B cell (primary cell): ENCODE measurements at regions of chr19 and their contacts with region 1.

Region 1: DNA sequence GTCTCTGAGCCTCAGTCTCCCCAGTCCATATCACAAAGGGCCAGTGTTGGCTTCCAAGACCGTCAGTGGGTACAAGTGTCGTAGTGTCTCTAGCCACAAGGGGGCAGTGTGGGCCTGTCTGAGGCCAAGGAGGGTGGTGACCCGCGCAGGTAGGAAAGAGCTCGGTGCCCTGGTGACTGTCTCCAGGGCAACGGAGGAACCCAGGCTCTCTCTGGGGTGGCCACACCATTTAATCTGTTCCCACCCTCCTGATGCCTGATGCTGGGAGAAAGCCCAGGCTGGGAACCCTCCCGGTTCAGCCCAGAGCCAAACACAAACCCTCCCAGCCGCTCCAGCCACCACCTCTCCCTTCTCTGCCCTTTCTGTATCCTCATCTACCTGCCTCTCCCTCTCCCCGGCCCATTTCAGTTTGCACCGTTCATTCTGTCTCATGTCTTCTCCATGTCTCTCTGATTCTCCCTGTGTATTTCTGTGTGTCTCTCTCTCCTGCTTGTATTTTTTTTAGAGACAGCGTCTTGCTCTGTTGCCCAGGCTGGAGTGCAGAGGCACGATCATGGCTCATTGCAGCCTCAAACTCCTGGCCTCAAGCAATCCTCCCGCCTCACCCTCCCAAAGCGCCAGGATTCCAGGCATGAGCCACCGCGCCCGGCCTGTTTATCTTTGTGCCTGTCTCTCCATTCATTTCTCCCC is 17.5 kb upstream of the MEIS3 start:
- DNase-seq: peak; percentile 84
- ATAC-seq: peak; percentile 92
- H3K4me3 ChIP-seq: no peak overlapping the region
- H3K4me3 Mint-ChIP-seq: no peak overlapping the region
- H3K27ac ChIP-seq: no peak overlapping the region
- H3K27ac Mint-ChIP-seq: no peak overlapping the region
- H3K4me1 ChIP-seq: peaks cover 3 to 6% of the 10 kb centered on the region in 2 donors
- H3K4me1 Mint-ChIP-seq: peaks cover 5% of the 10 kb centered on the region
- H3K27me3 ChIP-seq: peaks cover 0 to 71% (median 25%) of the 10 kb centered on the region in 4 experiments
- H3K27me3 Mint-ChIP-seq: peaks cover 70% of the 10 kb centered on the region
- CTCF ChIP-seq: peak; percentile 89

Region 2: DNA sequence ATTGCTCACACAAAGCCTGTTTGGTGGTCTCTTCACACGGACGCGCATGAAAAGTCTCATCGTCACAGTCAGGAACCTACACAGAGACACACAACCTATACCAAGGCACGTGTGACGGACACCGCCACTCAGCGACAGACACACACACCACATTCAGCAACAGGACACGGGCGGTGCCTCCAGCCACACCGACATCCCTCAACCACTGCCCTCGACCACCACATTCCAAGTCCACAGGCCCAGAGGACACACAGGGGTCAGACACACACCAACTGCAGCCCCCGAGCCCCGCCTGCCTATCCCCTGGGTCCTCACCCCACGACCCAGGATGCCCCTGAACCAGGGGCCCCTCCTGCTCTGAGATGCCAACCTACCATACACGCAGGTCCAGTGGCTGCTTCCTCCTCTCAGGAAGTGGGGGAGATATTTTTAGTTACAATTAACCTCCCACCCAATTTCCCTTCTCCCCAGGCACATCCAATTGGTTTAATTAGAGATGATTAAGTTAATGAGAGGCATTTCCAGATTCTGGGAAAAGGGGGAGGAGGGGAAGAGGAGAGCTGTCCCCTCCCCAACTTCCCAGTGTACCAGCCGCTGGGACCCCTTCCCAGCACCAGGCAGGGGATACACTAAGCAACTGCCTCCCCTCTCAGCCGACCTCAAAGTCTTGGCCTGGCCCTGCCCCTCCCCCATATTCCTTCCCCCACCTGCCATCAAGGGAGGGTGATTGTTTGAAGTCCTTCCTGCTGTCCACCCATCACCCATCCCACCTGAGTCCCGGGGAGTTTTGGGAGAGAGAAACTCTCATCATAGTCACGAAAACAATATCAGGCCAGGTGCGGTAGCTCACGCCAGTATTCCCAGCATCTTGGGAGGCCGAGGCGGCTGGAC is 37.9 kb before region 1 on chr19:
- CTCF ChIA-PET with region 1: no interaction called
- POLR2A ChIA-PET with region 1: no interaction called
- intact Hi-C with region 1: no loop called
- DNase-seq: no peak
- ATAC-seq: no peak
- H3K4me3 ChIP-seq: no peak overlapping the region
- H3K4me3 Mint-ChIP-seq: no peak overlapping the region
- H3K27ac ChIP-seq: no peak overlapping the region
- H3K27ac Mint-ChIP-seq: no peak overlapping the region
- H3K4me1 ChIP-seq: no peaks in the 10 kb centered on the region
- H3K4me1 Mint-ChIP-seq: no peaks in the 10 kb centered on the region
- H3K27me3 ChIP-seq: no peaks in the 10 kb centered on the region
- H3K27me3 Mint-ChIP-seq: peaks cover 40% of the 10 kb centered on the region
- CTCF ChIP-seq: no peak

Region 3: GRCh38 chr19:47697863-47698609 is 261.2 kb after region 1 on chr19:
- CTCF ChIA-PET with region 1: interaction called, 106 read pairs
- POLR2A ChIA-PET with region 1: no interaction called
- intact Hi-C with region 1: no loop called
- DNase-seq: peak; percentile 70
- ATAC-seq: peak; percentile 60
- H3K4me3 ChIP-seq: no peak overlapping the region
- H3K4me3 Mint-ChIP-seq: no peak overlapping the region
- H3K27ac ChIP-seq: no peak overlapping the region
- H3K27ac Mint-ChIP-seq: no peak overlapping the region
- H3K4me1 ChIP-seq: no peaks in the 10 kb centered on the region
- H3K4me1 Mint-ChIP-seq: no peaks in the 10 kb centered on the region
- H3K27me3 ChIP-seq: no peaks in the 10 kb centered on the region
- H3K27me3 Mint-ChIP-seq: no peaks in the 10 kb centered on the region
- CTCF ChIP-seq: peak; percentile 84

Region 4: GRCh38 chr19:47707135-47707925 is 270.5 kb after region 1 on chr19:
- CTCF ChIA-PET with region 1: interaction called, 175 read pairs
- POLR2A ChIA-PET with region 1: no interaction called
- intact Hi-C with region 1: loop called (anchors 1 kb)
- DNase-seq: peak; percentile 73
- ATAC-seq: peak; percentile 73
- H3K4me3 ChIP-seq: no peak overlapping the region
- H3K4me3 Mint-ChIP-seq: no peak overlapping the region
- H3K27ac ChIP-seq: no peak overlapping the region
- H3K27ac Mint-ChIP-seq: no peak overlapping the region
- H3K4me1 ChIP-seq: no peaks in the 10 kb centered on the region
- H3K4me1 Mint-ChIP-seq: no peaks in the 10 kb centered on the region
- H3K27me3 ChIP-seq: peaks cover 0 to 10% (median 6%) of the 10 kb centered on the region in 4 experiments
- H3K27me3 Mint-ChIP-seq: peaks cover 16% of the 10 kb centered on the region
- CTCF ChIP-seq: peak; percentile 69